Esophagus squamous epithelium (tissue), 5 donors: ENCODE measurements at regions of chr6 and their contacts with region 1.

Region 1: DNA sequence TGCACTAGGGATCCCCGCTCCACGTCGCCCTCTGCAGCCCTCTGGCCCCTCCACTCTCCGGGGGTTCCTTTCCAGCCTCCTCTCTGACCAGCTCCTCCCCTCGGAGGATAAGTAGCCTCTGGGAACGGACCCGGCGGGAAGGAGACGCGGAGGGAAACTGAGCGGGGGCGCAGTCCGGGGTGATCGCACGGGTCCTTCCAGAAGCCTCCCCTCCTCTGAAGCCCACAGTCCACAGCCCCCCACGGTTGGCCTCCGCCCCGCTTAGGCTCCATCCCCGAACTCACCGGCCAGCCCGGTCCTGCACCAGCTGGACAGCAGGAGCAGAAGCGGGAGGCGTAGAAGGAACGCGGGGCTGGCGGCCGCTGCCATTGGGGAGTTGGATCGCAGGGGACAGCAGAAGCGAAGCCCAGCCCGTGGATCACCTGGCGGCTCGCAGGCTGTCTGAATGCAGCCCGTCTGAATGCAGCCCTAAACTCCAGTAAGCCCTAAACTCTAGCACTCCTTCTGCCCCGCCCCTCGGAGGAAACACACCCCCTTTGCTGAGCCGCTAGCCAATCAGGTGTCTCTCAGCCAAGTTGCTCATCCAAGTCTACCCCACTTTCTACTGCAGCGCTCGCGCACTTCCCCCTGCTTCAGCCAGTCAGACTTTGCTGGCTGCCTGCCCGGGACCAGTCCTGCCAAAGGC is at the start of gene RAET1G:
- DNase-seq: peak; percentile 50
- H3K4me3 ChIP-seq: peak within 1 kb of the TSS; percentile 46 to 71 (median 60)
- H3K27ac ChIP-seq: peak within 1 kb of the TSS in 3 of 4 donors; percentile 71 to 78 (median 75)
- H3K4me1 ChIP-seq: peaks cover 16 to 52% (median 30%) of the 10 kb centered on the region in 3 donors
- H3K27me3 ChIP-seq: peaks cover 0 to 21% (median 0%) of the 10 kb centered on the region in 4 donors
- CTCF ChIP-seq: peak in 1 of 6 experiments; percentile 3
- POLR2A ChIP-seq: peak in 2 of 4 donors; percentile 61 to 75
- total RNA-seq, gene RAET1G: 9.0 to 26.8 (median 13.5) TPM

Region 2: DNA sequence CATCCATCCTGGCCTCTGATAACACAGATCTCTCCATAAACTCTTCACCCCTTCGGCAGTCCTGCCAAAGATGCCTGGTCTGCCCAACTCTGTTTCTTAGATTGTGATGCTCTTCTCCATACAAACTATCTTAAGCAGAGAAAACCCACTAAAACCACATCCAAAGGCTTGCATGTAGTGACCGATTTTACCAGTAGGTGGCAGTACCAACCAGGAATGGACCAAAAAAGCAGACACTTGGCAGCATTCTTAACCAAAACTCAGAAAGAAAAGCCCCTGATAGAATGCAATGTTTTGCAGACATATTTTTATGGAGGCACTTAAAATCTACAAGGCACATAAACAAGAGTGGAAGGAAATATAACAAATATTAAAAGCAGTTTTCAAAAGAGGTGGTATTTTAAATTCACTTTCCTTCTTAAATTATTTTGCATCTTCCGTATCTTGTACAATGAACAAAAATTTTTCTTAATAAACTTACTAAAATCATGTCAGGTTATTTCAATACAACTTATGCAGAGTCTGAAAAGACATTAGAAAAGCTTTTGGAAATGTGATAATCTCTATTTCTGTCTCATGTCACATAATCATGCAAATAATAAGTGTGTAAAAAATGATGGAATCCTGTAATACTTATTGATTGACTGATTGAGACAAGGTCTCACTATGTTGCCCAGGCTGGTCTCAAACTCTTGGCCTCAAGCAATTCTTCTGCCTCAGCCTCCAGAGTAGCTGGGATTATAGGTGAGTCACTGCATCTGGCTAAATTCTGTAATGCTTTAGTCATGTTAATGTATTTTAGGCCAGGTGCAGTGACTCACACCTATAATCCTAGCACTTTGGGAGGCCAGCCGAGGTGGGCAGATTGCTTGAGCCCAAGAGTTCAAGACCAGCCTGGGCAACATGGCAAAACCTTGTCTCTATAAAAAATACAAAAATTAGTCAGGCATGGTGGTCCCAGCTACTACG is 88.0 kb before region 1 on chr6:
- intact Hi-C with region 1: loop called (anchors 5 kb)
- DNase-seq: no peak
- H3K4me3 ChIP-seq: no peak overlapping the region
- H3K27ac ChIP-seq: no peak overlapping the region
- H3K4me1 ChIP-seq: no peaks in the 10 kb centered on the region
- H3K27me3 ChIP-seq: no peaks in the 10 kb centered on the region
- CTCF ChIP-seq: peak; percentile 90 to 96 (median 92)
- POLR2A ChIP-seq: no peak